K562 (cell line): ENCODE measurements at regions of chr7 and their contacts with region 1.

Region 1: DNA sequence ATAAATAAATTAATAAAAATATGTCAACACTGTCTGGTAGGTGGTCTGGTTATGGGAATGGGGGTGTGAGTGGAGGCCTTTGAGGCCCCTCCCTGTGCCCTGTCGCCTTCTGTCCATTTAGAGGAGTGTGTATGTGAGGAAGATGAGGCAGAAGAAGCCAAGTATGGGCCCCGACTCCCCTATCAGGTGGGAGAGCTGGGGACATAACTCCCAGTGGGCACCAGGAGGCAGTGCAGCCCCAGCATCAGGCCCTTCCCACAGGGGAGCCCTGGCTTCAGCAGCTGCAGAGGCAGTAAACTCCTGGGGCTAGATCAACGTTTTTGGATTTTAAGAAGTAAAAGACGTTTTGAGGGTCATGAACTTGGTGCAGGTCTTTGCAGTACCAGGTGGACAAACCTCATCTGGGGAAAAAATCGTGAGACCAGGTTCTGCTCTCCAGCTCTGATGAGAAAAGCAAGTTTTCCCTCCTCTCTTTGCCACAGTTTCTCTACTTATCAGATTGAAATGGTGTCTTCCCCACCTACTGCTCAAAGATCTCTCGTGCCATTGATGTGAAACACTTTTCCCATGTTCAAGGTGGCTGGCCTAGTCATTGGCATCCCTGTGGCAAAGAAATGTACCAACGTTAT is 167.8 kb upstream of the EEPD1 start:
- DNase-seq: peak; percentile 70 to 74 (median 72)
- ATAC-seq: peak; percentile 99
- H3K4me3 ChIP-seq: no peak overlapping the region
- H3K27ac ChIP-seq: no peak overlapping the region
- H3K4me1 ChIP-seq: peaks cover 0 to 5% of the 10 kb centered on the region in 2 experiments; a peak in 2 of 5 replicates
- H3K27me3 ChIP-seq: peaks cover 18 to 59% of the 10 kb centered on the region in 2 experiments
- CTCF ChIP-seq: peak; percentile 86 to 93 (median 90)
- EP300 ChIP-seq: no peak
- POLR2A ChIP-seq: no peak
- RAD21 ChIP-seq: peak; percentile 98

Region 2: GRCh38 chr7:36084475-36085097 is 99.3 kb after region 1 on chr7:
- CTCF ChIA-PET with region 1: no interaction called
- POLR2A ChIA-PET with region 1: no interaction called
- in situ Hi-C with region 1: no loop called
- intact Hi-C with region 1: no loop called
- DNase-seq: peak; percentile 37 to 52 (median 45)
- ATAC-seq: peak; percentile 88
- H3K4me3 ChIP-seq: no peak overlapping the region
- H3K27ac ChIP-seq: no peak overlapping the region
- H3K4me1 ChIP-seq: peaks cover 0 to 11% of the 10 kb centered on the region in 2 experiments; a peak in 2 of 5 replicates
- H3K27me3 ChIP-seq: peaks cover 12 to 49% of the 10 kb centered on the region in 2 experiments
- CTCF ChIP-seq: peak; percentile 35 to 55 (median 54)
- EP300 ChIP-seq: no peak
- POLR2A ChIP-seq: no peak
- RAD21 ChIP-seq: peak; percentile 49 to 64; a peak in 3 of 4 replicates

Region 3: DNA sequence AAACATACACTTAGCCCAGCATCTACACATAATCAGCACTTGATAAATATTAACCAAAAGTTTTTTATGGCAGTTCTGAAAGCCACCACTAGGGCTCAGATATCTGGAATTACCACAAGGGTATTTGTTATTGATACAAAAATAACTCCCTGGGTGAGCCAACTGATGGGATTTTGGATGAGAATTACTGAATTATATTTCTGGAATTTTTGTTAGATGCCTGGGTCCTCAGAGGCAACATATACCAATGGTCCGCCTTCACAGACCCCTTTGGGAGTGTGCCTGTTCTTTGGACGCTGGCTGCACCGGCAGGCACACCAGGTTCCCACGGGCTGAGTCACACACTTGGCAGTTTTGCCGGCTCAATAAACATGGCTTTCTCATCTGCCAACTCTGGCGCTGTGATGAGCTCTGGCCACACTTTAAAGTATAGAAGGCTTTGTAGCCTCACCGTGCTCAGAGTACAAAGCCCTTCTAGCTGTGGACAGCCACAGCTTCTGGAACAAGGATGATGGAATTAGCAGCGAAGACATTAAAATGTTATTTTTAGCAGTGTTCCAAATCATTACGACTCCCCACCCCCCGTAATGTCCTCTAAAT is 143.3 kb after region 1 on chr7:
- CTCF ChIA-PET with region 1: no interaction called
- POLR2A ChIA-PET with region 1: no interaction called
- in situ Hi-C with region 1: no loop called
- intact Hi-C with region 1: loop called (anchors 5 kb)
- DNase-seq: peak; percentile 17 to 29 (median 22)
- ATAC-seq: peak; percentile 46; the same call in 1 of the 3 replicates
- H3K4me3 ChIP-seq: no peak overlapping the region
- H3K27ac ChIP-seq: no peak overlapping the region
- H3K4me1 ChIP-seq: no peaks in the 10 kb centered on the region; a peak in 1 of 5 replicates
- H3K27me3 ChIP-seq: peaks cover 0 to 17% of the 10 kb centered on the region in 2 experiments; a peak in 2 of 5 replicates
- CTCF ChIP-seq: peak; percentile 28 to 56 (median 45); a peak in 5 of 6 replicates
- EP300 ChIP-seq: no peak
- POLR2A ChIP-seq: no peak
- RAD21 ChIP-seq: no peak

Region 4: DNA sequence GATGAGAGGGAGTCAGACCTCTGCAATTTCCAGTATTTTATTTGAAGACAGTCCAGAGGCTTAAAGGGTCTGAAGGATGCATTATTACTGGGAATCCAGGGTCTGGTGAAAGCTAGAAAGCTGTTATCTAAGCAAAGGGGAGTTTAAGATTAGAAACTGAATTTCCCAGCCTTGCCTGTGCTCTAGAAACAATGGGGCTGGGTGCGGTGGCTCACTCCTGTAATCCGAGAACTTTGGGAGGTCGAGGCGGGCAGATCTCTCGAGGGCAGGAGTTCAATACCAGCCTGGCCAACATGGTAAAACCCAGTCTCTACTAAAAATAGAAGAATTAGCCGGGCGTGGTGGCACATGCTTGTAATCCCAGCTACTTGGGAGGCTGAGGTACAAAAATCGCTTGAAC is 332.9 kb after region 1 on chr7:
- CTCF ChIA-PET with region 1: interaction called, 15 read pairs
- POLR2A ChIA-PET with region 1: interaction called, 3 read pairs
- in situ Hi-C with region 1: no loop called
- intact Hi-C with region 1: loop called (anchors 1 kb)
- DNase-seq: no peak
- ATAC-seq: no peak
- H3K4me3 ChIP-seq: no peak overlapping the region
- H3K27ac ChIP-seq: no peak overlapping the region
- H3K4me1 ChIP-seq: peaks cover 0 to under 1% of the 10 kb centered on the region in 2 experiments; a peak in 1 of 5 replicates
- H3K27me3 ChIP-seq: peaks cover 0 to 18% of the 10 kb centered on the region in 2 experiments; a peak in 2 of 5 replicates
- CTCF ChIP-seq: no peak
- EP300 ChIP-seq: no peak
- POLR2A ChIP-seq: no peak
- RAD21 ChIP-seq: no peak